HepG2 (cell line): ENCODE measurements at regions of chr2 and their contacts with region 1.

Region 1: DNA sequence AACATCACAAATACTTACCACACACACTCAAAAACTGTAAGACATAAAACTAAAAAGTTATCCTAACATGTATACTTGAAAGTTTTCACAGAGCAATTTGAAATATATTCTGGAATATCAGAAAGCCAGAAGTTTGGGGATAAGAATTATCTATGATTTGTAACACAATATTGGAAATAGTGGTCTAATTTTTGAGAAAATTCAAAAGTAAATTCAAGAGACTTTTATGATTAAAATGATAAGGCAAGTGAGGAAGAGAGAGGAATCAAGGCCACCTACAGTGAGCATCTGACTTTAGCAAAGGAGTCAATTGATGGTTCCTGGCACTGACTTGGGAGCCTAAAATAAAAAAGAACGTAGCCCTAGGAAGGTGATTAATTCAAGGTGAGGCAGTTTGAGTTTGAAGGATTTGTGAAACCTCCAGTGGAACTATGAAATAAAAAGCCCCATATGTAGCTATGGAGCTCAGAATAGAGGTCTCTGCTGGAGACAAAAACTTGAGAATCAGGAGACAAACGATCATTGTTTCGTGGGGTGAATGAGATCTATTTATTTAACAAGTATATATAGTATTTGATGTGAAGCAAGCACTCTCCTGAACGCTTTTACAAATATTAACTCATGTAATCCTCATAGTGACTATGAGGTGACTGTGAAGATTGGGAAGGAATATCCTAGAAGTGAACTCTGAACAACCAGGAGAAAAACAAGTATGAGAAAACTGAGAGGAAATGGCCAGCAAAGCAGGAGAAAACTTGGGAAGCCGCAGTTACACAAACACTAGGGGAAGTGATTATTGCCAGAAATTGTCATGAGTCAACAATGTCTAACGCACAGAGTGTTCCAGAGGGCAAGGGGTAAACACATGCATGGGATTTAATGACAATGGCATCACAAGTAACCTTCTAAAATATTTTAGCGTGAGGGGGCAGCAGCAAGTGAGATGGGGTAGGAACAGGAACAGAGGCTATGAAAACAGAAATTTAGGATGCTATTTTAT is 12.8 kb downstream of the TFPI start:
- DNase-seq: peak; percentile 98
- ATAC-seq: peak; percentile 98
- H3K4me3 ChIP-seq: peak overlapping the region in 1 of 3 experiments; percentile 2; a peak in 1 of 6 replicates
- H3K27ac ChIP-seq: peak overlapping the region; percentile 85
- H3K4me1 ChIP-seq: peaks cover 75% of the 10 kb centered on the region
- H3K27me3 ChIP-seq: no peaks in the 10 kb centered on the region
- CTCF ChIP-seq: peak; percentile 41
- EP300 ChIP-seq: peak in 1 of 2 experiments; percentile 97; a peak in 2 of 4 replicates
- POLR2A ChIP-seq: 0 out of 4 replicates have a peak, but pooled peaks of 1 of the 2 experiments have one; percentile 20
- RAD21 ChIP-seq: no peak

Region 2: DNA sequence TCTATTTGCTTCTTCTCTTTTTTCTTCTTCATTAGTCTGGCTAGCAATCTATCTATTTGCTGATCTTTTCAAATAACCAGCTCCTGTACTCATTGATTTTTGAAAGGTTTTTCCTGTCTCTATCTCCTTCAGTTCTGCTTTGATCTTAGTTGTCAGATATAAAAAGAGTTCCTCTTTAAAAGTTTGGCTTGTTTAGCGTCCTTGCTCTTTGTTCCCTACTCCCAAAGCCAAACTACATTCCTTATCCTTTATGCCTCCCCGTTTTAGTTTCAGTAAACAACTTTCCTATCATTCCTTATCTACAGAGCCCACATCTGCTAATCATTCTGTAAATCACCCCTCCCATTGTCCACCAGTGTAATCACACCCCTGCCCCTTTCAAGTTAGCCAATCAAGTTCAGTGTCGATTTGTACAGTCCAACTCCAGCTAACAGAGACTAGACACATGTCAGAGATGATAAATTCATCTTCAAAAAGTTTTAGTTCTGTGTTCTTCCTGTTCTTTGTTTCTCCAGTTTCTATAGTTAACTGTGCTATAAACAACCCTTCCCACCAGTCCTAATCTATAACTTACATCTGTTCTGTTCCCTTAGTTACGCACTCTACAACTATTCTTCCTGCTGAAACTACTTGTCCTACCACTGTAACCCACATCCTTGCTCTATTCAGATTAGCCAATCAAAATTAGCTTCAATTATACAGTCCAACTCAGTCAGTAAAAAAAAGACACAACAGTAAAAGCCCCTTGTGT is 31.5 kb before region 1 on chr2:
- CTCF ChIA-PET with region 1: no interaction called
- POLR2A ChIA-PET with region 1: interaction called, 10 read pairs
- in situ Hi-C with region 1: loop called (anchors 5 kb)
- intact Hi-C with region 1: loop called (anchors 1 kb)
- DNase-seq: peak; percentile 99
- ATAC-seq: peak; percentile 91
- H3K4me3 ChIP-seq: peak overlapping the region; percentile 9 to 70 (median 56); a peak in 4 of 6 replicates
- H3K27ac ChIP-seq: peak overlapping the region; percentile 75
- H3K4me1 ChIP-seq: peaks cover 90% of the 10 kb centered on the region
- H3K27me3 ChIP-seq: no peaks in the 10 kb centered on the region; a peak in 1 of 5 replicates
- CTCF ChIP-seq: no peak
- EP300 ChIP-seq: peak; percentile 28 to 99; a peak in 2 of 4 replicates
- POLR2A ChIP-seq: no peak; a peak in 1 of 4 replicates
- RAD21 ChIP-seq: no peak

Region 3: GRCh38 chr2:187527262-187527661 is 14.1 kb before region 1 on chr2:
- CTCF ChIA-PET with region 1: no interaction called
- POLR2A ChIA-PET with region 1: interaction called, 7 read pairs
- in situ Hi-C with region 1: no loop called
- intact Hi-C with region 1: loop called (anchors 1 kb)
- DNase-seq: peak; percentile 78
- ATAC-seq: peak; percentile 71
- H3K4me3 ChIP-seq: no peak overlapping the region; a peak in 1 of 6 replicates
- H3K27ac ChIP-seq: peak overlapping the region; percentile 60
- H3K4me1 ChIP-seq: peaks cover 89% of the 10 kb centered on the region
- H3K27me3 ChIP-seq: no peaks in the 10 kb centered on the region
- CTCF ChIP-seq: no peak
- EP300 ChIP-seq: peak in 1 of 2 experiments; percentile 75; a peak in 2 of 4 replicates
- POLR2A ChIP-seq: no peak
- RAD21 ChIP-seq: no peak

Region 4: DNA sequence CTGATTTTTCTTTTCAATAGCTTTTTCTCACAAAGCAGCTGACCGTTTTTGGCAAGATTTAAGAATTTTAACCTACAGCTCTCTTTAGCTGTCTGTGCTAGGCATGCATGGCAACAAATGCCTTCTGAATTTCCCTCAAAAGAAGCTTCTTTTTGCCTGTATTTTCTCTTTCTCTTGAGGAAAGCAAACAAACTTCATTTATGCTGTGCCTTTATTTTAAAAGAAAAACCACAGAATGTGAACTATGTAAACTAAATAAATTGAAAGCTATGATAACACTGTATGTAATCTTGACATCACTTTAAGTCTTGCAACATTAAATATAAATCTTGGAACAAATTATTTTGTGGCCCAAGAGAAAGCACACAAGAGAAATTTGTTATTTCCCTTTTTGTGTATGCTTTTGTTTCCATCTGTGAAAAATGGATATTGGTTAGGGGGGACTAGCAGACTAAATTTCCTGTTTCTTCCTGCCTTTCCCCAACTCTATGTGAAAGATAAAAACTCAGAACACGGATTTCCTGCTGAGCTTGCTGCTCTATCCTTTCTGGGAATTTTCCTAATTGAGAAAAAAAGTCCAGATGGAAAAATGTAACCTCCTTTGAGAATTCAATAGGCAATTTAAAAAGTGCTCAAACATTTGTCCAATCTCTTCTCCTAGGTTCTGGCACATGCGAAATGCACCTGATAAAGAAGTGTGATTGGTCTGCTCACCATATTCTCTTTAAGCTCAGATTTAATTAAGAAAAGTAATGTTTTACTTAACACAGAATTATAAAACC is 33.8 kb after region 1 on chr2:
- CTCF ChIA-PET with region 1: no interaction called
- POLR2A ChIA-PET with region 1: interaction called, 5 read pairs
- in situ Hi-C with region 1: no loop called
- intact Hi-C with region 1: loop called (anchors 1 kb)
- DNase-seq: no peak
- ATAC-seq: no peak
- H3K4me3 ChIP-seq: no peak overlapping the region
- H3K27ac ChIP-seq: no peak overlapping the region
- H3K4me1 ChIP-seq: peaks cover 35% of the 10 kb centered on the region
- H3K27me3 ChIP-seq: no peaks in the 10 kb centered on the region
- CTCF ChIP-seq: no peak
- EP300 ChIP-seq: no peak
- POLR2A ChIP-seq: no peak
- RAD21 ChIP-seq: no peak